Heart left ventricle (tissue), 16 donors: ENCODE measurements at regions of chr4 and their contacts with region 1.

Region 1: GRCh38 chr4:123785538-123785937 is 388.9 kb downstream of the SPRY1 start:
- DNase-seq: peak; percentile 49 to 68 (median 63)
- ATAC-seq: peak; percentile 37 to 90 (median 74)
- H3K4me3 ChIP-seq: no peak overlapping the region
- H3K27ac ChIP-seq: peak overlapping the region; percentile 1 to 88 (median 74)
- H3K4me1 ChIP-seq: peaks cover 0 to 55% (median 11%) of the 10 kb centered on the region in 12 donors
- H3K27me3 ChIP-seq: no peaks in the 10 kb centered on the region
- CTCF ChIP-seq: no peak
- POLR2A ChIP-seq: no peak

Region 2: GRCh38 chr4:121869841-121870656 is 1915.5 kb before region 1 on chr4 and contains the start of gene BBS7:
- intact Hi-C with region 1: no loop called
- DNase-seq: peak; percentile 97 to 99 (median 98)
- ATAC-seq: peak; percentile 99 to 100 (median 100)
- H3K4me3 ChIP-seq: peak within 1 kb of the TSS; percentile 59 to 96 (median 84)
- H3K27ac ChIP-seq: peak within 1 kb of the TSS; percentile 26 to 93 (median 84)
- H3K4me1 ChIP-seq: peaks cover 0 to 11% (median 2%) of the 10 kb centered on the region in 12 donors
- H3K27me3 ChIP-seq: peaks cover 0 to 4% (median 0%) of the 10 kb centered on the region in 9 donors
- CTCF ChIP-seq: no peak
- POLR2A ChIP-seq: peak in 1 of 2 donors; percentile 83
- total RNA-seq, gene BBS7: 3.3 to 7.8 (median 4.9) TPM

Region 3: DNA sequence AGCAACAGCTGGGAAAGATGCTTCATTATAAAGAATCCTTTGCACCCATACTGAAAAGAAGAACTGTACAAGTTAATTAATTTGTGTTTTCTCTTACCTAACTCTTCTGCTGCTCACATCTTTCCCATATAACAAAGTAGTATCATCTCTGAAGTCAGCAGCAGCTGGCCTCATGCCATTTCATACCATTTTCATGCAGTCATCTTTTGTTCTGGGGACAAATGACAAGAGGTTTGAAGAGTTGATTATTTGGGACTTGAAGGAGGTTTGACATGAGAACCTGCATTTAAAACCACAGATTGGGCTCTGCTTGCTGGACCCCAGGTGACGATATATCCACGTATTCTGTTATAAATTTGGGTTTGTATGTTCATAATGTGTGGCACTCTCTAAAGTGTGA is 41.4 kb after region 1 on chr4:
- intact Hi-C with region 1: loop called in 5 of 10 experiments (anchors 5 kb)
- DNase-seq: peak in 4 of 5 donors; percentile 50 to 71 (median 66)
- ATAC-seq: peak in 3 of 4 donors; percentile 68 to 74 (median 71)
- H3K4me3 ChIP-seq: no peak overlapping the region
- H3K27ac ChIP-seq: peak overlapping the region in 10 of 12 donors; percentile 24 to 70 (median 57)
- H3K4me1 ChIP-seq: peaks cover 0 to 60% (median 23%) of the 10 kb centered on the region in 12 donors
- H3K27me3 ChIP-seq: no peaks in the 10 kb centered on the region
- CTCF ChIP-seq: no peak
- POLR2A ChIP-seq: no peak

Region 4: GRCh38 chr4:123869286-123870060 is 83.9 kb after region 1 on chr4:
- intact Hi-C with region 1: no loop called
- DNase-seq: peak in 1 of 5 donors; percentile 28
- ATAC-seq: peak; percentile 30 to 78 (median 60)
- H3K4me3 ChIP-seq: no peak overlapping the region
- H3K27ac ChIP-seq: peak overlapping the region in 9 of 12 donors; percentile 3 to 60 (median 41)
- H3K4me1 ChIP-seq: peaks cover 0 to 30% (median 12%) of the 10 kb centered on the region in 12 donors
- H3K27me3 ChIP-seq: no peaks in the 10 kb centered on the region
- CTCF ChIP-seq: no peak
- POLR2A ChIP-seq: no peak